Aorta (tissue), 5 donors: ENCODE measurements at regions of chr1 and their contacts with region 1.

Region 1: DNA sequence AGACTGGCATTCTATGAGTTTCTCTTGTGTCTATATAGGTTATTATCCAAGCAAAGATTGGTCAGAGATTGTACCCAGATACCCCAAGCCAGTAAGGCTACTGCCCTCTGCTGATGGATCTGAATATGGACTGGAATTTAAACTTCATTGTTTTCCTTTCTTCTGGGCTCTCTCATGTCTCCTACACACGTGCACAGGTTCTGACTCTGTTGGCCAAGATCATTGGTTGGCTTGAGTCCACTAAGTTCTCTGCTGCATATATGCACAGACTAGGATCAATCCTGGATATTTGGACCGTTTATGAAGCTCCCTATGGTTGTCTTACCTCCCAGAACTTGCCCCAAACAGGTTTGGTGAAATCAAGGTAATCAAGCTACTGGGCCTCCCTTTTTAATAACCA is 69.7 kb downstream of the CC2D1B start:
- DNase-seq: no peak
- ATAC-seq: peak; percentile 78
- H3K4me3 ChIP-seq: no peak overlapping the region
- H3K27ac ChIP-seq: no peak overlapping the region
- H3K4me1 ChIP-seq: no peaks in the 10 kb centered on the region
- H3K27me3 ChIP-seq: no peaks in the 10 kb centered on the region

Region 2: DNA sequence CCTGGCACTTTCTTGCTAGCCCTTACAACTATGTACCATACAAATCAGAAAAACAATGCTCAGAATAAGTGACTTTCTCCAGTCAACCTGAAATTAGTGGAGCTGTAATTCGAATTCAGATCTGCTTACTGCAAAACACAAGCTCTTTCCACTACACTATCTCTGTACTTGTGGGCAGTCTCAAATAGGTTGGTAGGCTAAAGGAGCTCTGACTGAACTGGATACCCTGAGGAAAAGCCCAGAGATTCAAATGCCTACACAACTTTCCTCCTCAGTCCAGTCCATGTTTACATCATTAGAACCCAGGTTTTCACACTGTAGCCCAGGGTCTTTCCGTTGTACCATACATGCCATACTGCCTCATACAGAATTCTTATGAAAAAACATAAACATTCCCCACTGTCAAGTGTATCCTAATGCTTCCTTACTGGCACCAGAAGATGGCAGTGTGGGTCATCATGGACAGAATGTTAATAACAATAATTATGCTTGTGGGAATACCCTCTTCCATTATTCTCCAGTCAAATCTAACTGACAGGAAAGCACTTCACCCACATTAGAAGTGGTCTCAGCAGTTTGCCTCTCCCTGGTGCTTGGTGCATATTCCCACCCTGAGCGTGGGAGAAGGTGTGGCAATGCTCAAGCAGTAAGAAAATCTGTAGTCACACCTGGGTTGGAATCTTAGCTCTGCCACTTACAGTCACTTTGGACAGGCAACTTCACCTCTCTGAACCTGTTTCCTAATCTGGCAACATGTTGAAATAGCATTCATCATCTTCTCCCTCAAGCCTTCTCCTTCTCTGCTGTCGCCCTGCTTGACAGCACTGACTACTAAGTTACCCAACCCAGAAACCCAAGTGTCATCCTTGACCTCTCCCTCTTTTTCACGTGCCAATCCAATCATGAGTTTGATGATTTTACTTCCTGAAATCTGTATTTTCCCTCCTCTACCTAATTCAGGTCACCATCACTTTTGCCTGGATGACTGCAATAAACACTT is 168.9 kb before region 1 on chr1:
- intact Hi-C with region 1: loop called (anchors 5 kb)
- DNase-seq: no peak
- ATAC-seq: no peak
- H3K4me3 ChIP-seq: no peak overlapping the region
- H3K27ac ChIP-seq: no peak overlapping the region
- H3K4me1 ChIP-seq: no peaks in the 10 kb centered on the region
- H3K27me3 ChIP-seq: no peaks in the 10 kb centered on the region

Region 3: GRCh38 chr1:52179085-52179484 is 117.3 kb before region 1 on chr1:
- intact Hi-C with region 1: no loop called
- DNase-seq: no peak
- ATAC-seq: no peak
- H3K4me3 ChIP-seq: no peak overlapping the region
- H3K27ac ChIP-seq: no peak overlapping the region
- H3K4me1 ChIP-seq: peaks cover 0 to 1% of the 10 kb centered on the region in 2 donors
- H3K27me3 ChIP-seq: no peaks in the 10 kb centered on the region